ENCODE measurements at regions of chr10 and their contacts with region 1.

Region 1: DNA sequence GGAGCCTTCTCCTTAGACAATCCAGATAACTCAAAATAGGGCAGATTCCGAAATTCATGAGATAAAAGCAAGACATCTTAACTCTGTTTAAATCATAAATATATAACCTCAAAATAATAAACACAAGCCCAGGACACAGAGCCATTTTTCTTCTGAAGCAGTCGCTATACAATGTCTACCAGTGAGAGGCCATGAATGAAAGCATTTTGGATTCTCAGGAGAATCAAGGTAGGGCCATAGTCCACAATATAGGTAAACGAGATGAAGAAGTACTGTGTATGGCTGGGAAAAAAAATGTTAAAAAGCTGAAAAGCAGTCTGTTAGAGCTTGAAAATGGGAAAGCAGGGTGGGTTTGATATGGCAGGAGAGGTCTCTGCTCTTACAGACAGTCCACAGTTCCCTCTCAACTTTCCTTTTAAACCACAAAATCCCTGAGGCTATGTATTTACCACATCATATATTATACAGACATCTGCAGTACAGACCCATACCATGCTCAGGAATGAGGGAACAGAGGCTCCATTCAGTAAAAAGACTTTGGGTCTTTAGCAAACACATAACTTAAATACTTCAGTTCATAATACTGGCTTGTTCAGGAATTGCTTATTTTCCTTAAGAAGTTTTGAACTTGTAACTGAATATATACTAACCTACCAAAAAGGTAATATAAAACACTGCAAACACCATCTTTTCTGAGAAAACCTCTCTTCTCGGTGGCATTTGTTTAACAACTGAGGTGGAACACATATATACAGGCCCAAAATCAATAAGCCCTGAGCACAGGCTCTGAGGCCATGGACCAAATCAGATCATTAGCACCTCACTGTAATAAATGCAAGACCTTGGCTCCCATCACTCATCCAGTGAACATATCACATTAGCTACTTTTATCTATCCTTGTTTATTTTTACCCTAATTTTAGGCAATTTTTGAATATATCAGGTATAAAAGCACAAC is 109.3 kb downstream of the SORBS1 start:
- DNase-seq: no peak
- H3K4me3 ChIP-seq: no peak overlapping the region
- H3K27ac ChIP-seq: peak overlapping the region; percentile 49 to 61
- H3K4me1 ChIP-seq: no peaks in the 10 kb centered on the region
- H3K27me3 ChIP-seq: no peaks in the 10 kb centered on the region
- CTCF ChIP-seq: no peak
- POLR2A ChIP-seq: no peak

Region 2: GRCh38 chr10:95517536-95518454 is 65.9 kb after region 1 on chr10:
- intact Hi-C with region 1: loop called (anchors 5 kb)
- DNase-seq: no peak
- H3K4me3 ChIP-seq: no peak overlapping the region
- H3K27ac ChIP-seq: peak overlapping the region; percentile 41 to 56
- H3K4me1 ChIP-seq: no peaks in the 10 kb centered on the region
- H3K27me3 ChIP-seq: no peaks in the 10 kb centered on the region
- CTCF ChIP-seq: no peak
- POLR2A ChIP-seq: no peak